Panc1 (cell line): ENCODE measurements at regions of chr22 and their contacts with region 1.

Region 1: GRCh38 chr22:35150183-35151107 is 84.5 kb downstream of the ISX start:
- DNase-seq: peak; percentile 20
- ATAC-seq: peak; percentile 80; the same call in 1 of the 2 replicates
- H3K4me3 ChIP-seq: no peak overlapping the region
- H3K27ac ChIP-seq: no peak overlapping the region
- H3K4me1 ChIP-seq: no peaks in the 10 kb centered on the region
- H3K27me3 ChIP-seq: no peaks in the 10 kb centered on the region
- CTCF ChIP-seq: peak; percentile 85

Region 2: GRCh38 chr22:33920927-33921524 is 1229.4 kb before region 1 on chr22:
- CTCF ChIA-PET with region 1: no interaction called
- POLR2A ChIA-PET with region 1: interaction called, 13 read pairs
- in situ Hi-C with region 1: no loop called
- intact Hi-C with region 1: no loop called
- DNase-seq: no peak
- ATAC-seq: peak; percentile 91
- H3K4me3 ChIP-seq: peak overlapping the region; percentile 39 to 60
- H3K27ac ChIP-seq: no peak overlapping the region
- H3K4me1 ChIP-seq: peaks cover 7% of the 10 kb centered on the region
- H3K27me3 ChIP-seq: peaks cover 14% of the 10 kb centered on the region
- CTCF ChIP-seq: no peak

Region 3: GRCh38 chr22:34045311-34045710 is 1105.1 kb before region 1 on chr22:
- CTCF ChIA-PET with region 1: interaction called, 10 read pairs
- POLR2A ChIA-PET with region 1: no interaction called
- in situ Hi-C with region 1: no loop called
- intact Hi-C with region 1: no loop called
- DNase-seq: no peak
- ATAC-seq: no peak
- H3K4me3 ChIP-seq: no peak overlapping the region
- H3K27ac ChIP-seq: no peak overlapping the region
- H3K4me1 ChIP-seq: no peaks in the 10 kb centered on the region
- H3K27me3 ChIP-seq: no peaks in the 10 kb centered on the region
- CTCF ChIP-seq: no peak

Region 4: DNA sequence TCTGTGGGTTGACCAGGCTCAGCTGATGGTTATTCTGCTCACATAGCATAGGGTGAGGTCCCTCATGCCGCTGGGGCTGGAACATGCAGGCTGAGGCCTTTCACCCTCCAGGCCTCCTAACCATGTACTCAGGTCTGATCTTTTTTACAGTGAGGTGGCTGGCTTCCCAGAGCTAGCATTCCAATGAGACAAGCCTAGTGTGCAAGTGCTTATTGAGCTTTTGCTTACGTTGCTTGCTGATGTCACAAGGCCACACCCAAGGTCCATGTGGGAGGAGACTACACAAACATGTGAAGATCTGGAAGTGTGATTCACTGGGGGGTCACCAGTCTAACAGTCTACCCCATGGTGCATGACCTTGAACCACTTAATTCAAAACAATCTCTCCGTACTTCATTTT is 50.6 kb before region 1 on chr22:
- CTCF ChIA-PET with region 1: no interaction called
- POLR2A ChIA-PET with region 1: no interaction called
- in situ Hi-C with region 1: no loop called
- intact Hi-C with region 1: no loop called
- DNase-seq: no peak
- ATAC-seq: no peak
- H3K4me3 ChIP-seq: no peak overlapping the region
- H3K27ac ChIP-seq: no peak overlapping the region
- H3K4me1 ChIP-seq: no peaks in the 10 kb centered on the region
- H3K27me3 ChIP-seq: no peaks in the 10 kb centered on the region
- CTCF ChIP-seq: no peak

Region 5: DNA sequence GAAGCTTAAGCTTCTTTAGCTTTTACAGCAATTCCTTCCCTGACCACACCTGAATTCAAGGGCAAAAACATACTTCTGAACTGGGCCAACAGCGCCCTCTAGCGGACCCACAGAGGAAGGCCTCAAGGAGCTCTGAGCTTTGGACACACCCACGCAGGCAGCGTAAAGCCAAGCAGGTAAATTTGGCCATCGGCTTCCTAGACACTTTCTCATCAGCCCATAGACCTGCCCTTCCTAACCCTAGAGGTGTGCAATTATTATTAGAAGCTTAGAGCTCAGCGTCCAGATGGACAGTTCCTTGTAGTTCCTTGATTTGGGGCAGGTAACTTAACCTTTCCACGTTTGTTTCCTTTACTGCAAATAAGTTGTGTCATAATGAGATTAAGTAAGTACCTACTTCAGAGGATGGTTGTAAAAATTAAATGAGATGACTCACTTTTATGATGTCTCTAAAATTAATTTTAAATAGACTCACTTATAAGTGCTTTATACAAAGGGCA is 81.2 kb after region 1 on chr22:
- CTCF ChIA-PET with region 1: interaction called, 9 read pairs
- POLR2A ChIA-PET with region 1: no interaction called
- in situ Hi-C with region 1: no loop called
- intact Hi-C with region 1: loop called (anchors 5 kb)
- DNase-seq: peak; percentile 47
- ATAC-seq: peak; percentile 92
- H3K4me3 ChIP-seq: no peak overlapping the region
- H3K27ac ChIP-seq: no peak overlapping the region
- H3K4me1 ChIP-seq: no peaks in the 10 kb centered on the region
- H3K27me3 ChIP-seq: no peaks in the 10 kb centered on the region
- CTCF ChIP-seq: peak; percentile 88